ENCODE measurements at regions of chr11 and their contacts with region 1.

Region 1: GRCh38 chr11:117946842-117947526 is 17.8 kb upstream of the TMPRSS13 start:
- DNase-seq: peak; percentile 79
- CTCF ChIP-seq: peak; percentile 93

Region 2: GRCh38 chr11:117799634-117800033 is 147.3 kb before region 1 on chr11:
- CTCF ChIA-PET with region 1: interaction called, 144 read pairs
- POLR2A ChIA-PET with region 1: no interaction called
- DNase-seq: no peak
- CTCF ChIP-seq: no peak

Region 3: GRCh38 chr11:117843666-117844484 is 103.1 kb before region 1 on chr11:
- CTCF ChIA-PET with region 1: interaction called, 169 read pairs
- POLR2A ChIA-PET with region 1: no interaction called
- DNase-seq: peak; percentile 71
- CTCF ChIP-seq: peak; percentile 99

Region 4: GRCh38 chr11:117919781-117920221 is 27.2 kb before region 1 on chr11:
- CTCF ChIA-PET with region 1: interaction called, 39 read pairs
- POLR2A ChIA-PET with region 1: no interaction called
- DNase-seq: peak; percentile 51
- CTCF ChIP-seq: no peak

Region 5: GRCh38 chr11:117979481-117980211 is 32.7 kb after region 1 on chr11:
- CTCF ChIA-PET with region 1: interaction called, 23 read pairs
- POLR2A ChIA-PET with region 1: no interaction called
- DNase-seq: no peak
- CTCF ChIP-seq: no peak

Region 6: DNA sequence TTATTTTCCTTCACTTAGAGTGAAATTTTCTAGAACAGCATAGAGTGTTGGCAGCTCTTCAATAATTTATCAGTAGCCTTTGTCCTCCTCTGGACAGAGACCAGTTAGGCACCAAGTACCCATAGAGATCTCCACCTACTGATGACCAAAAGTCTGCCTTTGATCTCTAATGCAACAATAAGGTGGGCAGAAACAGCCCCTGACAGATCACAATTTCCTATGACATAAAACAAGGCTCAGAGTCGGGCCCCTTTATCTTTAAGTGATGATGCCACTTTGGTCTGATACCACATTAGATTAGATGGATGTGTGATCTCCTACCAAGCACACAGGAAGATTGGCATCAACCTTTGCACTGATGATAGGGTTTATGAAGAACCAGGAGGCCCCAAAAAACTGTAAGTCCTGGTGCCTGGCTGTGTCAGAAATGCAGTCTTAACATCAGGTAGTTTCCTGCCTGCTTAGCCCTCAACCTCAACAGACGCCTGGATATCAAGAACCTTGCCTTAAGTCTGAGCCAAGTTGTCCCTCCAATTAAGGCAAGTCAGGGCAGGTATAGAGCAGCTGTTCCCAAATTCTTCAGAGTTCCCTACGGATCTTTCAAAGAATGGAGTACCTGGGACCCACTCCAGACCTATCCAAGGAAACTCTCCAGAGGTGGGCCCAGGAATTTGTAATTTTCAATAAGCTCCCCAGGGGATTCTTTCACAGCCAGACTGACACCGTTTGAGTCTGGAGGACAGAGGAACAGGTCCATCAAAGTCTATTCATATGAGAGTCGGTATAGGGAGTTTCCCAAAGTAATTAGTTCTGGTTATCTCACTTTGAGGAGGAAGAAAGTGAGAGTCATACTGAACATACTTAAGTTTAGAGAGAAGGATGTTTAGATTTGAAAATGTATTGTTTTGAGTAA is 99.3 kb after region 1 on chr11:
- CTCF ChIA-PET with region 1: interaction called, 102 read pairs
- POLR2A ChIA-PET with region 1: no interaction called
- DNase-seq: peak; percentile 43
- CTCF ChIP-seq: no peak

Region 7: DNA sequence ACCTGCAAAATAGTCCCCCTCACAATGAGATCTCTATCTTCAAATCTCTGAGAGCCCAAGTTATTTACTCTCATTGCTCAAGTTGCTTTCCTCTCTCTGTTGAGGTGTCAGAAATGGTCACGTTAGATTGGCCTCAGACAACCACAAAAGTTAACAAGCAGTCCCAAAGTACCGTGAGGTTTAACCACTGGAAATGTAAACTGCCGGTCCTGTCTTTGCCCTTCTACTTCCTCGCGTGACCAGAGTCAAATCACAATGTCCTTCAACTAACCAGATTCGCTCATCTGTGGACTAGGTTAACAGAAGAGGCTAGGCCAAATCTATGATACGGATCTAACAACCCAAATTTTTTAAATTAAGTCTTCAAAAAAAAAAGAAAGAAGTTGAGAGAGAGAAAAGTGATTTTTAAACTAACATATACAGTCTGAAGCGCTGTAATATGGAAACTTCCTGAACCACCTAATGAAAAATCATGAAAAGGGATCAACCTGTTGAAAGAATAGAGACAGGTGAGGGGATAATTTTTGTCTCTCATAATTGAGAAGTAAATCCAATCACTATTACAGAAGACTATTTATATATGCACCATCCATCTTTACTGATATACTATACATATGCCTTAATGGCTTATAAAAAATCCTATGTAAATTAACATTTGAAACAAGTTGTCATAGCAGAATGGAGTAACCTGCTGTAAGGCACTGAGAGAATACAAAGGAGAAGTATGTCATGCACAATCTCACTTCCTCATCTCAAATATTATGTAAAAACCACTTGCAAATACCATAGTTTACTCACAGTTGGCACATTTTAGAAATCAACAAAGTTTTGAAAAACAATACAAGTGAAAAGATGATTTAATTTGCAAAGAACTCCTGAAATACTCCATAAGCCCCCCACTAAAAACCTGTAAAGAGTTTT is 281.1 kb after region 1 on chr11:
- CTCF ChIA-PET with region 1: no interaction called
- POLR2A ChIA-PET with region 1: no interaction called
- DNase-seq: peak; percentile 35
- CTCF ChIP-seq: no peak